ENCODE measurements at regions of chr14 and their contacts with region 1.

Region 1: GRCh38 chr14:102341566-102341965 is 21.1 kb downstream of the CINP start:
- DNase-seq: no peak

Region 2: GRCh38 chr14:102316743-102317563 is 24.6 kb before region 1 on chr14:
- intact Hi-C with region 1: no loop called
- DNase-seq: peak; percentile 98

Region 3: DNA sequence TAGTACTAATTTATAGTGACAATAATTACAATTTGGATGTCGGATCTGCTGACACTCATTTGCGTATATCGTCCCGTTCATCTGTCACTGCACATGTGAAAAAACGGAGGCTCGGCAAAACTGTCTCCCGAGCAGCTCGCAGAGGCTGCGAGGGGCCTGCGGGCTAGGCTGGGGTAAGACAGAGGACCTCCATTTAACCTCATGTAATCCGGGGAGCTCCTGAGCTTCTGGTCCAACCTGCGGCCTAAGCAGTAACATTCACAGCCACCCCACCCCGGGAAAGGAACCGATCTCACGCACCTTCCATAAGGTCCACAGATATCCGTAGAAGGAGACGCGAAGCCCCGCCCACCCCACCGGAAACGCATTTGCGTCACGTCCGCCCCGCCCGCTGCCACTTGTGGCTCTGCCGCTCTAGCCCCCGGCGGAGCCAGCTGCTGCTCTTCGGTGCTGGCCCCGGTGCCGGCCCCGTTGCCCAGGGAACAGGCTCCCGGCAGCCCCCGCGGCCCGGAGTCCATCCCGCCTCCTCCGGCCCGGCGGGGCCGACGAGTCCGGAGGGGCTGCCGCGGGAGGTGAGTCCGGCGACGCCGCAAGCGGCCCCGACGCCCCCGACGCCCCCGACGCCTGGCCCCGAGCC is 21.1 kb after region 1 on chr14 and contains the starts of genes CINP and TECPR2:
- intact Hi-C with region 1: loop called in 1 of 2 experiments (anchors 1 kb)
- DNase-seq: peak; percentile 99
- total RNA-seq, gene CINP: 27.4 to 30.7 TPM
- total RNA-seq, gene TECPR2: 34.3 to 45.5 TPM

Measured in posterior vena cava (tissue), 2 donors.